ENCODE measurements at regions of chr6 and their contacts with region 1.

Region 1: DNA sequence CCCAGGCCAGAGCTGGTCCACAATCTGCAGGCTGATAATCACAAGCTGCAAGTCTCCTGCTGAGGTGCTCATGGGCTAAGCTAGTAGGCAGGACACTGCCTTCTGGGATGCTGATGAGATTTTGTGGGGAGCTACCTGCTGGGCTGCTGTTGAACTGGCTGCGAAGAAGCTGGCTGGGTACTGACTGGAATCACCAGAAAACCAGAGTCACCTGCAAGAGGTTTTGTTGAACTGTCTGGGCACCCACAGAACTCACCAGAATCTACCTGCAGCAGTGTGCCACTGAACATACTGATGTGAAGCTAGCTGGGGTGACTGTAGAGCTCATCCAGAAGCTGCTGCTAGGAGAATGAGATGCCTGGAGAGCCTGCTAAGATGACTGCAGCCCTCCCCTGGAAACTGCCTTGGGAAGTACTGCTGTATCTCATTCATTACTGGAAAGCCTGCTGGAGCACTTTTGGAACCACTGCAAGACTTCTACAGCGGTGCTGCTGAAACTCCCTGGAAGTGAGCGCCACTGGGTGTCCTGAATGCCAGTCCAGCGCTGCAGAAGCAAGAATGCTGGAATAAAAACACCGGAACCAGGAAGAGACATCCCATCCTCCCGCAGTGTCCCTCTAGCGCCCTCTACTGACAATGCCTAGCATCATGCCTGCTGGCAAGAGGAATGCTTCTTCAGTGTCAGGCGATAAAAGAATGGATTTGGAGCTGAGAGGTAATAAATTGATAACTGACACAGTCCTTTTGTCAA is 64.9 kb upstream of the ARHGAP18 start:
- DNase-seq: peak; percentile 64
- H3K4me3 ChIP-seq: peak overlapping the region; percentile 21 to 28; a peak in 2 of 4 replicates
- H3K27ac ChIP-seq: no peak overlapping the region
- H3K4me1 ChIP-seq: no peaks in the 10 kb centered on the region; a peak in 1 of 4 replicates
- H3K27me3 ChIP-seq: no peaks in the 10 kb centered on the region
- CTCF ChIP-seq: peak; percentile 93
- EP300 ChIP-seq: no peak
- RAD21 ChIP-seq: peak; percentile 59

Region 2: DNA sequence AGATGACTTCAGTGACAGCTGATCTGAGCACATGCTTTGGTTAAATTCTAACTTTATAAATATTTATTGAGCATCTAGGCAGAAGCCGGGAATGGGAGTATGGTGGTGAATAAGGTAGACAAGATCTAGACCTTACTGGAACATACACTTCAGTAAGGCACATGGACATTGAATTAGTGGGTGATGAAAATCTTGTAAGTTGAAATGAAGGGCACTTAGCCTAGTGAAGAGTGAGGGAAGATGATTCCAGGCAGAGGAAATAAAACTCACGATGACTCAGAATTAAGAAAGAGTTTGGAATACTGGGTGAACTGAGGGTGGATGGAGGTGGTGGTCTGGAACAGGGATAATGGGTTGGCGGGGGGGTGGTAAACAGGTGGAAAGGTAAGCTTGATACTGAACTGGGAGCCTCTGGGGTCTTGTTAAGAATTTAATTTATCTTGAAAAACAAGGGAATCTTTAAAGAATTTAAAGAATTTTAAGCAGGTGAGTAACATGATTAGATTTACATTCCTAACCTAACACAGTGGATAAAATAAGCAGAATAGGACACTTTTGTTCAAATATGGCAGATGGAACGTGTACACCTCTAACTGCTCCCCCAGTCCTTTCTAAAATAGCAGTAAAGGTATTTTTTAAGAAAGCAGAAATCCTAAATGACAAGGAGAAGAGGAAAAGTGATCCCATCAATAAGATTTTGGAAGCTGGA is 10.3 kb after region 1 on chr6:
- CTCF ChIA-PET with region 1: interaction called, 13 read pairs
- POLR2A ChIA-PET with region 1: no interaction called
- DNase-seq: no peak
- H3K4me3 ChIP-seq: no peak overlapping the region
- H3K27ac ChIP-seq: peak overlapping the region in 1 of 2 experiments; percentile 6; a peak in 1 of 4 replicates
- H3K4me1 ChIP-seq: peaks cover 0 to 12% of the 10 kb centered on the region in 2 experiments; a peak in 1 of 4 replicates
- H3K27me3 ChIP-seq: no peaks in the 10 kb centered on the region
- CTCF ChIP-seq: no peak
- EP300 ChIP-seq: no peak
- RAD21 ChIP-seq: no peak

Region 3: GRCh38 chr6:129790785-129791184 is 15.9 kb after region 1 on chr6:
- CTCF ChIA-PET with region 1: interaction called, 13 read pairs
- POLR2A ChIA-PET with region 1: no interaction called
- DNase-seq: no peak
- H3K4me3 ChIP-seq: no peak overlapping the region
- H3K27ac ChIP-seq: no peak overlapping the region
- H3K4me1 ChIP-seq: peaks cover 0 to 1% of the 10 kb centered on the region in 2 experiments; a peak in 1 of 4 replicates
- H3K27me3 ChIP-seq: no peaks in the 10 kb centered on the region
- CTCF ChIP-seq: no peak
- EP300 ChIP-seq: no peak
- RAD21 ChIP-seq: no peak

Region 4: DNA sequence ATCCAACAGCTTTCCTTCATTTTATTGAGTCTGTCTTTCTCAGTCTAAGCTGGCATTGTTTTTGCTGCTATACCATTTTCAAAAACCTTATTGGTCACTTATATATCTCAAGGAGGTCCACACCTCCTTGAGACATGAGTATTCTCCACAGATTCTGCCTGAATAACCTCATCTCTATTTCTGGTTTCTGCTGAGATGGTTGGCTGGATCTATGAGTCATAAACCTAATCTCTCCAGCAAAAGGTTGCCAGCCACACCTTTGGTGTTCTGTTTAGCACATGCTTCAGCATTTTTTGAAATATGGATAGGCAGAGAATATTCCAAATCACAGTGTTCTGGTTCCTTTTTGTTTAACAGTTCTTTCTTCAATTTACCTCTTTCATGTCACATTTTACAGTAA is 127.0 kb after region 1 on chr6:
- CTCF ChIA-PET with region 1: no interaction called
- POLR2A ChIA-PET with region 1: no interaction called
- DNase-seq: no peak
- H3K4me3 ChIP-seq: no peak overlapping the region
- H3K27ac ChIP-seq: no peak overlapping the region
- H3K4me1 ChIP-seq: no peaks in the 10 kb centered on the region
- H3K27me3 ChIP-seq: no peaks in the 10 kb centered on the region
- CTCF ChIP-seq: no peak
- EP300 ChIP-seq: no peak
- RAD21 ChIP-seq: no peak